Activated T-helper 2 cell treated with anti-CD3 and anti-CD28 coated beads, Interferon-gamma antibody, Interleukin-2, Interleukin-4, amounts not matched to agents 10 μg/mL and 5 μg/mL and 100 μg/mL, durations not matched to agents 14 hours and 24 hours and 36 hours (primary cell): ENCODE measurements at regions of chr2 and their contacts with region 1.

Region 1: GRCh38 chr2:181312515-181312927 is 144.7 kb upstream of the ITGA4 start:
- DNase-seq: peak; percentile 34
- H3K4me3 Mint-ChIP-seq: peak overlapping the region; percentile 82
- H3K27ac Mint-ChIP-seq: peak overlapping the region; percentile 98
- H3K4me1 Mint-ChIP-seq: peaks cover 62% of the 10 kb centered on the region
- H3K27me3 Mint-ChIP-seq: no peaks in the 10 kb centered on the region

Region 2: DNA sequence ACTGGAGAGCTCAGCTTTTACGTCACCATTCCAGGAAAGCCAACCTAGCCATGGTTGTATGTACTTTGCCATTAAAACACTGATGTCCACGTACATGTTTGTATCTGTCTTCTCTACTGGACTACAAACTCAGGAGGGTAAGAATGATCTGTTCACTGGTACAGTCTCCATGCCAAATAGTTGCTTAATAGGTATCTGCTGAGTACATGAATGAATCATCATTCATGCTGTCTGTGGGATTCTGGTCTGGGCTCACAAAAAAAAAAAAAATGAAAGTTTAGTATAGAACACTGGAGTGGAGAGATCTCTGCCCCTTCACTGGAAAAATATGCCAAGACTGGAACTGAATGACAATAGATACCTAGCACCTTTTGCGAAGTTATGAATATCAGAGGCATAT is 42.1 kb after region 1 on chr2:
- intact Hi-C with region 1: loop called (anchors 5 kb)
- DNase-seq: no peak
- H3K4me3 Mint-ChIP-seq: no peak overlapping the region
- H3K27ac Mint-ChIP-seq: no peak overlapping the region
- H3K4me1 Mint-ChIP-seq: peaks cover 41% of the 10 kb centered on the region
- H3K27me3 Mint-ChIP-seq: no peaks in the 10 kb centered on the region

Region 3: GRCh38 chr2:181891966-181892798 is 579.7 kb after region 1 on chr2:
- intact Hi-C with region 1: loop called (anchors 10 kb)
- DNase-seq: peak; percentile 61
- H3K4me3 Mint-ChIP-seq: peak overlapping the region; percentile 90
- H3K27ac Mint-ChIP-seq: peak overlapping the region; percentile 90
- H3K4me1 Mint-ChIP-seq: peaks cover 27% of the 10 kb centered on the region
- H3K27me3 Mint-ChIP-seq: peaks cover 19% of the 10 kb centered on the region